Heart left ventricle (tissue), 16 donors: ENCODE measurements at regions of chr14 and their contacts with region 1.

Region 1: DNA sequence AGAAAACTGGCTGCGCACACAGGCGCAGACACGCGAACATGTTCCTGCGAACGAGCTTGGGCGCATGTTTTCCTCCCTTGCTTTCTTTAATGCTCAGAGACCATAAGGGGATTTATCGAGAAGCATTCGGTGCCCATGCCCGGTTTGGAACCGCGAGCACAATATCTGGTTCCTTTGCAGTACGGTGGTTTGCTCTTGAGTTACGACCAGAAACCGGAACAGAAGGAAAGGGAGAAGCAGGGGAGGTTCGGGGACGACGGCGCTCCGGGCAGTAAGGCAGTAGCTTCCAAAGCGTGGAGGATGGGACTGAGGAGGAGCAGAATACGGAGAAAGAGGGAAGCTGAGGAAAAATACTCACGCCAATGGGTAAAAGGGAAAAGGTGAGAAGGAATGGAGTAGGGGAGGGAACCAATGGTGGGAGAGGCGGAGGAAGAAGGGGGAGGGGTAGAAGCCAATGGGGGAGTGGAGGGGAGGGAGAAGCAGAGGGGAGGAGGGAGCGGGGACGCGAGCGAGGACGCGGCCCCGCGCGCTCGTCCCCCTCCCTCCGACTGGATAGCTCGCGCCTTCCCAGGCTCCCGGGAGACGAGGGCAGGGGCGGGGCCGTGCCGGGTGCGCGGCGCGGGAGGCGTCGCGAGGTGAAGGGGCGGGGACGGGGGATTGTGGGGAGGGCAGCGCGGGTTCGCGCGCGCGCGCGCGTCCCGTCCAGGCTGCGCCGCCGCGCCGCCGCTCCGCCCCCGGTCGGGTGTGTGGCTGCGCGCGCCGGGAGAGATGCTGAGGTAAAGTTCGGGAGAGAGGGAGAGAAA is 625 bp upstream of the ARHGAP5 start:
- DNase-seq: peak; percentile 97 to 98 (median 97)
- ATAC-seq: peak; percentile 93 to 97 (median 97)
- H3K4me3 ChIP-seq: peak overlapping the region; percentile 75 to 95 (median 92)
- H3K27ac ChIP-seq: peak overlapping the region; percentile 87 to 100 (median 97)
- H3K4me1 ChIP-seq: peaks cover 3 to 45% (median 24%) of the 10 kb centered on the region in 12 donors
- H3K27me3 ChIP-seq: no peaks in the 10 kb centered on the region
- CTCF ChIP-seq: no peak
- POLR2A ChIP-seq: peak in 1 of 2 donors; percentile 46

Region 2: DNA sequence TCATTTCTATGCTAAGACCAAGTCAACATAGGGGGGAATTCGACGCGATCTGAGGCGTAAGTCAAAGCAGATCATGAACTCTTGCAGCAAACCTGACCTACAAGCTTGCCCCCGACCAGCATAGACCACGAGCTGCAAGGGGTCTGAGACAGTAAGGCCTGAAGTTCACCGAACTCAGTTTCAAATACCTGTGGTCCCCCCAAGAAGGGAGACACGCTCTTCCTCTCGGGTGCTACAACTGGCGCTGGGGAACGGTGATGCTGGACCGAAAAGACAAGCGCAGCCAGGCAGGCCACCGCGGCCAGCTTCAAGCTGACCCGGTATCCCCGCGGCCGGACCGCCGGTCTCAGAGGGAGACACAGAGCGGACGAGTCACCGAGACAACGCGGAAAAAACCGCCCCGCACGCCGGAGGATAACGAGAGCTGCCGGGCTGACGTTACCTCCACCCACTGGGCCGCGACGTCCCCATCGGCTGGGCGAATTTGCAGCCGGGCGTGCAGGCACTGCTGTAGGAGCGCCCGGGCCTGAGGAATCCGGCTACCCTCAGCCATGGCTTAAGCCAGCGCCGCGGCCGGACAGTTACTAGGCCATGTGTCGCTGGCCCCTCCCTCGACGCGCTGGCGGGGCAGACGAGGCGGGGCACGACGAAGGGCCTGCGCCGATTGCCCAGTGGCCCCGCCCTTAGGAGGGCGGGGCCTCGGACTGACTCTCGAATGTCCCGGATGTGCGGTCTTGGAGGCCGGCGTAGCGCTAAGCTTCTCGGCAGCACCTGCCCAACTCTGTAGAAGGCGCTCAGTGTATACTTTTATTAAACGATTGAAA is 619.4 kb before region 1 on chr14 and contains the start of gene DTD2:
- intact Hi-C with region 1: loop called in 1 of 10 experiments (anchors 5 kb)
- DNase-seq: peak; percentile 95 to 97 (median 96)
- ATAC-seq: peak; percentile 100
- H3K4me3 ChIP-seq: peak within 1 kb of the TSS; percentile 50 to 86 (median 70)
- H3K27ac ChIP-seq: peak within 1 kb of the TSS; percentile 70 to 97 (median 89)
- H3K4me1 ChIP-seq: peaks cover 0 to 41% (median 11%) of the 10 kb centered on the region in 12 donors
- H3K27me3 ChIP-seq: no peaks in the 10 kb centered on the region
- CTCF ChIP-seq: peak in 3 of 12 donors; percentile 8 to 23 (median 8)
- POLR2A ChIP-seq: peak in 1 of 2 donors; percentile 93
- total RNA-seq, gene DTD2: 5.4 to 12.2 (median 8.2) TPM

Region 3: GRCh38 chr14:31561155-31561846 is 515.2 kb before region 1 on chr14 and contains the start of gene NUBPL:
- intact Hi-C with region 1: loop called in 3 of 10 experiments (anchors 5 to 10 kb)
- DNase-seq: peak; percentile 94 to 98 (median 96)
- ATAC-seq: peak; percentile 92 to 98 (median 96)
- H3K4me3 ChIP-seq: peak within 1 kb of the TSS; percentile 77 to 98 (median 84)
- H3K27ac ChIP-seq: peak within 1 kb of the TSS; percentile 43 to 95 (median 89)
- H3K4me1 ChIP-seq: peaks cover 0 to 29% (median 10%) of the 10 kb centered on the region in 12 donors
- H3K27me3 ChIP-seq: no peaks in the 10 kb centered on the region
- CTCF ChIP-seq: no peak
- POLR2A ChIP-seq: peak in 1 of 2 donors; percentile 60
- total RNA-seq, gene NUBPL: 16.1 to 28.7 (median 19.1) TPM

Region 4: GRCh38 chr14:31937721-31938346 is 138.6 kb before region 1 on chr14:
- intact Hi-C with region 1: loop called in 5 of 10 experiments (anchors 2 to 10 kb)
- DNase-seq: peak; percentile 46 to 77 (median 60)
- ATAC-seq: peak; percentile 65 to 93 (median 88)
- H3K4me3 ChIP-seq: no peak overlapping the region
- H3K27ac ChIP-seq: no peak overlapping the region
- H3K4me1 ChIP-seq: peaks cover 0 to 30% (median 14%) of the 10 kb centered on the region in 12 donors
- H3K27me3 ChIP-seq: no peaks in the 10 kb centered on the region
- CTCF ChIP-seq: no peak
- POLR2A ChIP-seq: no peak

Region 5: GRCh38 chr14:32022938-32023466 is 53.5 kb before region 1 on chr14:
- intact Hi-C with region 1: loop called in 1 of 10 experiments (anchors 5 kb)
- DNase-seq: no peak
- ATAC-seq: peak in 2 of 4 donors; percentile 20 to 28
- H3K4me3 ChIP-seq: no peak overlapping the region
- H3K27ac ChIP-seq: no peak overlapping the region
- H3K4me1 ChIP-seq: peaks cover 0 to 20% (median 15%) of the 10 kb centered on the region in 12 donors
- H3K27me3 ChIP-seq: no peaks in the 10 kb centered on the region
- CTCF ChIP-seq: no peak
- POLR2A ChIP-seq: no peak

Region 6: GRCh38 chr14:32202998-32203882 is 126.8 kb after region 1 on chr14 and contains the start of gene RNU6-8:
- intact Hi-C with region 1: loop called (anchors 1 to 5 kb)
- DNase-seq: peak; percentile 87 to 94 (median 92)
- ATAC-seq: peak; percentile 84 to 93 (median 92)
- H3K4me3 ChIP-seq: peak within 1 kb of the TSS; percentile 40 to 81 (median 71)
- H3K27ac ChIP-seq: peak within 1 kb of the TSS; percentile 75 to 95 (median 90)
- H3K4me1 ChIP-seq: peaks cover 0 to 39% (median 7%) of the 10 kb centered on the region in 12 donors
- H3K27me3 ChIP-seq: peaks cover 0 to 11% (median 0%) of the 10 kb centered on the region in 9 donors
- CTCF ChIP-seq: no peak
- POLR2A ChIP-seq: peak in 1 of 2 donors; percentile 70
- total RNA-seq, gene RNU6-8: not detected

Region 7: GRCh38 chr14:32469388-32470160 is 393.1 kb after region 1 on chr14:
- intact Hi-C with region 1: loop called in 6 of 10 experiments (anchors 1 to 10 kb)
- DNase-seq: no peak
- ATAC-seq: peak in 2 of 4 donors; percentile 27 to 53
- H3K4me3 ChIP-seq: no peak overlapping the region
- H3K27ac ChIP-seq: peak overlapping the region in 10 of 12 donors; percentile 29 to 88 (median 72)
- H3K4me1 ChIP-seq: peaks cover 0 to 59% (median 23%) of the 10 kb centered on the region in 12 donors
- H3K27me3 ChIP-seq: no peaks in the 10 kb centered on the region
- CTCF ChIP-seq: peak; percentile 24 to 71 (median 62)
- POLR2A ChIP-seq: no peak